PC-9 (cell line): ENCODE measurements at regions of chr1 and their contacts with region 1.

Region 1: GRCh38 chr1:248825909-248826760 is at the start of gene SH3BP5L:
- DNase-seq: peak; percentile 80 to 87
- H3K4me3 ChIP-seq: peak within 1 kb of the TSS; percentile 75
- H3K27ac ChIP-seq: peak within 1 kb of the TSS; percentile 82
- H3K4me1 ChIP-seq: peaks cover 33% of the 10 kb centered on the region
- H3K27me3 ChIP-seq: no peaks in the 10 kb centered on the region
- CTCF ChIP-seq: peak; percentile 69
- total RNA-seq, gene SH3BP5L: 24.6 and 25.6 TPM in 2 replicates

Region 2: DNA sequence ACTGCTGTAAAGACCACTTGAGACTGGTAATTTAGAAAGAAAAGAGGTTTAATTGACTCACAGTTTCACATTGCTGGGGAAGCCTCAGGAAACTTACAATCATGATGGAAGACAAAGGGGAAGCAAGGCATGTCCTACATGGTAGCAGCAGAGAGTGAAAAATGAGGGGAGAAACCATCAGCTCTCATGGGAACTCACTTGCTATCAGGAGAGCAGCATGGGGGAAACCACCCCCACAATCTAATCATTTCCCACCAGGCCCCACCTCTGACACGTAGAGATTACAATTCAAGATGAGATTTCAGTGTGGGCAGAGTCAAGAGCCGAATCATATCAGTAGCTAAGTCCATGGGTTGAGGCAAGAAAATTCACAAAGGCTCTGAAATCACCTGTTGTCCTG is 46.8 kb before region 1 on chr1:
- CTCF ChIA-PET with region 1: no interaction called
- POLR2A ChIA-PET with region 1: no interaction called
- intact Hi-C with region 1: no loop called
- DNase-seq: no peak
- H3K4me3 ChIP-seq: no peak overlapping the region
- H3K27ac ChIP-seq: no peak overlapping the region
- H3K4me1 ChIP-seq: no peaks in the 10 kb centered on the region
- H3K27me3 ChIP-seq: no peaks in the 10 kb centered on the region; the same call in 1 of the 2 replicates
- CTCF ChIP-seq: no peak

Region 3: GRCh38 chr1:248811514-248812490 is 14.3 kb before region 1 on chr1:
- CTCF ChIA-PET with region 1: no interaction called
- POLR2A ChIA-PET with region 1: no interaction called
- intact Hi-C with region 1: loop called (anchors 1 kb)
- DNase-seq: no peak
- H3K4me3 ChIP-seq: no peak overlapping the region
- H3K27ac ChIP-seq: no peak overlapping the region
- H3K4me1 ChIP-seq: no peaks in the 10 kb centered on the region
- H3K27me3 ChIP-seq: no peaks in the 10 kb centered on the region
- CTCF ChIP-seq: no peak

Region 4: GRCh38 chr1:248837794-248838356 is 11.7 kb after region 1 on chr1 and contains the start of gene ZNF672:
- CTCF ChIA-PET with region 1: interaction called, 14 read pairs
- POLR2A ChIA-PET with region 1: interaction called, 53 read pairs
- intact Hi-C with region 1: loop called (anchors 1 kb)
- DNase-seq: peak; percentile 85 to 98
- H3K4me3 ChIP-seq: peak within 1 kb of the TSS; percentile 83
- H3K27ac ChIP-seq: peak within 1 kb of the TSS; percentile 88
- H3K4me1 ChIP-seq: peaks cover 11% of the 10 kb centered on the region; the same call in 1 of the 2 replicates
- H3K27me3 ChIP-seq: no peaks in the 10 kb centered on the region
- CTCF ChIP-seq: no peak
- total RNA-seq, gene ZNF672: 24.7 and 27.6 TPM in 2 replicates

Region 5: GRCh38 chr1:248858891-248859889 is 33.1 kb after region 1 on chr1 and contains the start of gene ZNF692:
- CTCF ChIA-PET with region 1: no interaction called
- POLR2A ChIA-PET with region 1: interaction called, 6 read pairs
- intact Hi-C with region 1: loop called (anchors 1 kb)
- DNase-seq: peak; percentile 75 to 95
- H3K4me3 ChIP-seq: peak within 1 kb of the TSS; percentile 75
- H3K27ac ChIP-seq: peak within 1 kb of the TSS; percentile 72
- H3K4me1 ChIP-seq: peaks cover 16% of the 10 kb centered on the region
- H3K27me3 ChIP-seq: no peaks in the 10 kb centered on the region
- CTCF ChIP-seq: no peak
- total RNA-seq, gene ZNF692: 46.6 and 51.7 TPM in 2 replicates

Region 6: DNA sequence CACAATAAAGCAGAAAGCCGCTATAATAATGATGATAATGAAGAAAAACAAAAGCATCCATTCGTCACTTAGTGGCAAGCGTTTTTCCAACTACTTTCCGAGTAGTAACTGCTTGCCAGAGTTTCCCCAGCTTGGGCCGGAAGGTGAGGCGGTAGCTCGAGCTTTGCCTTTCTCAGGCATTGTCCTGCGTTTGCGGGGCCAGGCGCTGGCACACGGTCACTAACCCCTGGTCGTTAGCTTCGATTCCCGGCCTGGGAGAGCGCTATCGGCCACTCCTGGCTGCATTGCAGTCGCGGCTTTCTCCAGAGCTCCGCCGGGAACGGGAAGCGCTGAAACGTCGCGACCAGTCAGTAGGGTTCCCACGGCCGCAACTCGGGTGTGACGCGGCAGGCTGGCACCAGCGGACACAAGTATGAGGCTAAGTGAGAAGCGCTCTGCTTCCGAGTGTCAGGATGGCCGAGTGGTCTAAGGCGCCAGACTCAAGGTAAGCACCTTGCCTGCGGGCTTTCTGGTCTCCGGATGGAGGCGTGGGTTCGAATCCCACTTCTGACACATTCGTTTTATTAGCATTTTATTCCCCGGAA is 47.4 kb after region 1 on chr1:
- CTCF ChIA-PET with region 1: no interaction called
- POLR2A ChIA-PET with region 1: interaction called, 3 read pairs
- intact Hi-C with region 1: loop called (anchors 1 kb)
- DNase-seq: peak; percentile 89 to 98
- H3K4me3 ChIP-seq: peak overlapping the region; percentile 75
- H3K27ac ChIP-seq: peak overlapping the region; percentile 83
- H3K4me1 ChIP-seq: peaks cover 10% of the 10 kb centered on the region
- H3K27me3 ChIP-seq: no peaks in the 10 kb centered on the region
- CTCF ChIP-seq: no peak

Region 7: DNA sequence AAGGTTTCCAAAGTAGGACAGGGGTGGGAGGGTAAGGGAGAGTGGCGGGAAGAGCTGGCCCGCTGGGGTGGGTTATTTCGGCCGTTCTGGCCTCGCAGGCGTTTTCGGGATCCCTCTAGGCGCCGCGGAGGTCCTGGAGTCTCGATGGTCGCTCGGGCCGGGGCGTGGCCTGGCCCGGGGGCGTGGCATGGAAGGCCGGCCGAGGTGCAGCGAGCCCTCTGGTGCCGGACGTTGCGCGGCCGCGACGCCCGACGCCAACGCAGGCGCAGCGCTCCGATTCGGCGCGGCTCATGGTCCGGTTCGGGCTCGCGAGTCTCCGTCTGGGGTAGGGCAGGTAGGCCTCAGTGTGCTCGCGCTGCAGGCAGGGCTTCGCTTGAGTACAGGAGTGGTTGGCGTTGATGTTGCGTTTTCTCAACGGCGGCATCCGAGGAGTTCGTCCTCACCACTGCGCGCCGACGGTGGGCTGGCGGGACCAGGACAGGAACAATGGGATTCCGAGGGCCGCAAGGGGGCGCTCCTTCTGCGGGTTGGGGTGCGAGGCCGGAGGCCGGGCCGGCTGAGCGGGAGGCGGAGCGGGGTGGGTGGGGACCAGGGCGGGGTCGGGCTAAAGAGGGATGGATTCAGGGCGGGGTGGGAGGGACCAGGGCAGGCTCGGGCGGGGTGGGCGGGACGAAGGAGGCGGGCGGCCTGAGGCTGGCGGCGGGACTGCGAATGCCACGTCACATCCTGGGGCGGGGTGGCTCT is 80.0 kb after region 1 on chr1 and contains the start of gene PGBD2:
- CTCF ChIA-PET with region 1: interaction called, 6 read pairs
- POLR2A ChIA-PET with region 1: interaction called, 7 read pairs
- intact Hi-C with region 1: loop called (anchors 1 kb)
- DNase-seq: peak; percentile 66 to 91
- H3K4me3 ChIP-seq: peak within 1 kb of the TSS; percentile 74
- H3K27ac ChIP-seq: peak within 1 kb of the TSS; percentile 63
- H3K4me1 ChIP-seq: no peaks in the 10 kb centered on the region
- H3K27me3 ChIP-seq: 0 out of 2 replicates have a peak, but pooled peaks cover 1% of the 10 kb centered on the region
- CTCF ChIP-seq: peak; percentile 73
- total RNA-seq, gene PGBD2: 5.3 and 5.6 TPM in 2 replicates